Activated CD4-positive, alpha-beta memory T cell treated with anti-CD3 and anti-CD28 coated beads, Interleukin-2, amount 10 ng/mL, durations not matched to agents 7 days and 5 days (primary cell): ENCODE measurements at regions of chr6 and their contacts with region 1.

Region 1: DNA sequence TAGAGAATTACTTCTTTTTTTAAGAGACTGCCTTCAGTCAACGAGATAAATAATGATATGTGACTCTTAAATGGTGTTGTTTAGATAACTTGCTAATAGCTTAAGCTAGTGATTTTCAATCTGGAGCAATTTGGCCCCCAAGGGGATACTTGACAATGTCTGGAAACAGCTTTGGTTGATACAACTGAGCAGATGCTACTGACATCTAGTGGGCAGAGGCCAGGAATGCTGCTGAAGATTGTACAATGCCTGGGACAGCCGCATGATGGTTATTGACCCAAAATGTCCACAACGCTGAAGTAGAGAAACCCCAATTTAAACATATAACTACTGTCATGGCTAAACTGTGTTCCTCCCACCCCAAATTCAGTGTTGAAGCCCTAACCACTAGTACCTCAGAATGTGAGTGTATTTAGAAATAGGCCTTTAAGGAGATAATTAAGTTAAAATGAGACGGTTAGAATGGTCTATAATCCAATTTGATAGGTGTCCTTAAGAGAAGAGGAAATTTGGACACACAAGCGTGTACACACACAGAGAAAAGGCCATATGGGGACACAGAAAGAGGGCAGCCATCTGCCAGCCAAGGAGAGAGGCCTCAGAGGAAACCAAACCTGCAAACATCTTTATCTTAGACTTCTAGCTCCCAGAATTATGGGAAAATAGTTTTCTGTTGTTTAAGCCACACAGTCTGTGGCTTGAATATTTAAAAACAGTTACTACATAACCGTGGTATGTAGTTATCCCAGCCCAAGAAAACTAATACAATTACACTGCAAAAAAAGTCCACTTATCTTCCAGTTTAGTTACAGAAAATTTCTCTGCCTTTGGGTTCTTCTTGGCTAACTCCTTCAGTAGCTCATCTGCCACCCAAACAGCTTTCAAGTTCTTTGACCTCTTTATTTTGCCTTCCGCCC is 22.2 kb downstream of the RWDD2A start:
- DNase-seq: peak; percentile 68
- H3K4me3 Mint-ChIP-seq: no peak overlapping the region
- H3K27ac Mint-ChIP-seq: no peak overlapping the region
- H3K4me1 Mint-ChIP-seq: no peaks in the 10 kb centered on the region
- H3K27me3 Mint-ChIP-seq: peaks cover 17% of the 10 kb centered on the region

Region 2: GRCh38 chr6:82988904-82989303 is 226.5 kb before region 1 on chr6:
- CTCF ChIA-PET with region 1: no interaction called
- POLR2A ChIA-PET with region 1: no interaction called
- DNase-seq: no peak
- H3K4me3 Mint-ChIP-seq: no peak overlapping the region
- H3K27ac Mint-ChIP-seq: no peak overlapping the region
- H3K4me1 Mint-ChIP-seq: no peaks in the 10 kb centered on the region
- H3K27me3 Mint-ChIP-seq: no peaks in the 10 kb centered on the region

Region 3: GRCh38 chr6:83160167-83160566 is 55.2 kb before region 1 on chr6:
- CTCF ChIA-PET with region 1: no interaction called
- POLR2A ChIA-PET with region 1: no interaction called
- DNase-seq: no peak
- H3K4me3 Mint-ChIP-seq: no peak overlapping the region
- H3K27ac Mint-ChIP-seq: no peak overlapping the region
- H3K4me1 Mint-ChIP-seq: peaks cover 2% of the 10 kb centered on the region
- H3K27me3 Mint-ChIP-seq: no peaks in the 10 kb centered on the region

Region 4: DNA sequence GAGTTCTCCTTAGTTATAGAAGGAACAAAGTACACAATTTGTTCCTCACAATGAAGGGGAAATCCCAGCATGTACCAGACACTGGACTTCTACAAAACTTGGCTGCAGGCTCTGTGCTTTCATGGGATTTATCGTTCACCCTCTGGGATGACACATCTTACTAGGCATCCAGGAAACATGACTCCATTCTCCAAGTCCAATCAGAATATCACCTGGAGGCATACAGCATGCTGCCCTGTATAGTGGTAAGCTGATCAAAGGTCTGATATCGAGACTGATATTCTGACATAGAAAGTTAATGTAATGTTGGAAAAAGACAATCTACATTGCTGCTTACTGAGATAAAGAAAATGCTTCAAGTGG is 15.5 kb before region 1 on chr6:
- CTCF ChIA-PET with region 1: interaction called, 12 read pairs
- POLR2A ChIA-PET with region 1: no interaction called
- DNase-seq: no peak
- H3K4me3 Mint-ChIP-seq: no peak overlapping the region
- H3K27ac Mint-ChIP-seq: no peak overlapping the region
- H3K4me1 Mint-ChIP-seq: peaks cover 4% of the 10 kb centered on the region
- H3K27me3 Mint-ChIP-seq: no peaks in the 10 kb centered on the region

Region 5: DNA sequence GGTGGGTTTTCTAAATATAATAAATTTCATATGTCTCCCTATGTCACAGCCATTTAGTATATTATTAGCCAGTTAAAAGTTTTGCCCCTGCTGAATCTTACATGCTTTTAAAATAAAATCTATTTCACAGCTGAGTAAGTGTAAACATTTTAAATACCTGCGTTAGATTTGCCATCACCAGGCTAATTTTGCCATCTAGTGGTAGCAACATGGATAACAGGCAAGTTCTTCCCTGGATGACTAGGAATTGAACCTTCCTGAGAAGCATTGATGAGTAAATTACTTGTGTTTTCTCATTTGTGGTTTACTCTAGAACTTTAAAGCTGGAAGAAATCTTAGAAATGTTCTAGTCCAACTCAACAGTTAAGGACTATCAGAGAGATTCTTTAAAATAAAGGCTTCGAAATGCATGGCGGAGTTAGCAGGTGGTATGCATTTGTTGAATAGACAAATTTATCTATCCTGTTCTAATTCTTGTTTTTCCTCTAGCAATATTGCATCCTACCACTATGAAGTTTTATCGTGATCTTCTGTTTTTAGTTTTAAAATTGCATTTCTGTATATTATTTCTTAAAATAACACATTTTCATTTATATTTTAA is 299.6 kb after region 1 on chr6:
- CTCF ChIA-PET with region 1: interaction called, 72 read pairs
- POLR2A ChIA-PET with region 1: no interaction called
- DNase-seq: peak; percentile 20
- H3K4me3 Mint-ChIP-seq: no peak overlapping the region
- H3K27ac Mint-ChIP-seq: no peak overlapping the region
- H3K4me1 Mint-ChIP-seq: peaks cover 6% of the 10 kb centered on the region
- H3K27me3 Mint-ChIP-seq: peaks cover 36% of the 10 kb centered on the region